CD4-positive, alpha-beta T cell (primary cell): ENCODE measurements at regions of chr7 and their contacts with region 1.

Region 1: DNA sequence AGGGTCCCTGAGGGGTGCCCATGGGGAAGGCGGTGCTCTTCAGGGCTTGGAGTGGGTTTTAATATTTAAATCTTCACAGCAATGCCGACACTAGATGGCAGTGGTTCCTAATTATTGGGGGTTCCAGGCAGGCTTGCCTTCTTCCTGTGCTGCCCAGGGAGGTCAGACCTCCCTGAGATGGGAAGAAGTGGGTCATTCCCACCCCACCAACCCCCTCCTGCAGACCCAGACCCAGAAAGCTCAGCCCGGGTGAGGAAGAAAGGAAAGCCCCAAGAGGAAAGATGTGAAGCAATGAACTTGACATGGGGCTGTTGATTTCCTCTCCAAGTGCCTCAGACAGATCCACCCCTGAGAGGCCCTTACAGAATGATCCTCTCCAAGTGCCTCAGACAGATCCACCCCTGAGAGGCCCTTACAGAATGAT is 85.1 kb upstream of the LANCL2 start:
- DNase-seq: peak; percentile 23 to 81 (median 44)
- ATAC-seq: peak; percentile 63
- H3K4me3 ChIP-seq: no peak overlapping the region
- H3K4me3 Mint-ChIP-seq: no peak overlapping the region
- H3K27ac ChIP-seq: no peak overlapping the region
- H3K27ac Mint-ChIP-seq: no peak overlapping the region
- H3K4me1 ChIP-seq: no peaks in the 10 kb centered on the region
- H3K4me1 Mint-ChIP-seq: no peaks in the 10 kb centered on the region
- H3K27me3 ChIP-seq: peaks cover 0 to 2% of the 10 kb centered on the region in 2 experiments
- H3K27me3 Mint-ChIP-seq: peaks cover 4% of the 10 kb centered on the region
- CTCF ChIP-seq: peak; percentile 71

Region 2: DNA sequence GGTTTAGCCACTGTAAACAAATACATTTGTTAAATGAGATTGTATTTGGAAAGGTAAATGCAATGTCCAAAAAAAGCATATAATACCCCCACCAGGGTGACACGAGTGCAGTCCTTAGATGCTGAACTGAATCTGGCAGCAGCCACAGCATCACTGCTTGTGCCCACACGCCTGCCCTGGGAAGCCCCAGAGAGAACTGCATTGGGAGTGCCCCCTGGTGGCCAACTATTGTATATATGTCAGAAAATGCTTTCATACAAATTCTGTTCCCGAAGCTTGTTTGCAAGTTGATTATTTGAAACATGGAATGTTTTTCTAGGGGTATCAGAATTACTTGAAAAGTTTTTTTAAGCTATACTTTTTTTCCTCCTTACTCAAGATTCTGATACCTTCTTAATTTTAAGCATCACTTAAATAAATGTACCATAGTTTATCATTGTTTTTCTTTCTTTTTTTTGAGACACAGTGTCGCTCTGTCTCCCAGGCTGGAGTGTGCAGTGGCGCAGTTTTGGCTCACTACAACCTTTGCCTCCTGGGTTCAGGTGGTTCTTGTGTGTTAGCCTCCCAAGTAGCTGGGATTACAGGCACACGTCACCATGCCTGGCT is 135.2 kb after region 1 on chr7:
- CTCF ChIA-PET with region 1: interaction called, 10 read pairs
- POLR2A ChIA-PET with region 1: no interaction called
- intact Hi-C with region 1: loop called (anchors 1 kb)
- DNase-seq: peak; percentile 62 to 88 (median 78)
- ATAC-seq: peak; percentile 99
- H3K4me3 ChIP-seq: no peak overlapping the region
- H3K4me3 Mint-ChIP-seq: no peak overlapping the region
- H3K27ac ChIP-seq: no peak overlapping the region
- H3K27ac Mint-ChIP-seq: no peak overlapping the region
- H3K4me1 ChIP-seq: no peaks in the 10 kb centered on the region
- H3K4me1 Mint-ChIP-seq: no peaks in the 10 kb centered on the region
- H3K27me3 ChIP-seq: no peaks in the 10 kb centered on the region
- H3K27me3 Mint-ChIP-seq: no peaks in the 10 kb centered on the region
- CTCF ChIP-seq: peak; percentile 95

Region 3: DNA sequence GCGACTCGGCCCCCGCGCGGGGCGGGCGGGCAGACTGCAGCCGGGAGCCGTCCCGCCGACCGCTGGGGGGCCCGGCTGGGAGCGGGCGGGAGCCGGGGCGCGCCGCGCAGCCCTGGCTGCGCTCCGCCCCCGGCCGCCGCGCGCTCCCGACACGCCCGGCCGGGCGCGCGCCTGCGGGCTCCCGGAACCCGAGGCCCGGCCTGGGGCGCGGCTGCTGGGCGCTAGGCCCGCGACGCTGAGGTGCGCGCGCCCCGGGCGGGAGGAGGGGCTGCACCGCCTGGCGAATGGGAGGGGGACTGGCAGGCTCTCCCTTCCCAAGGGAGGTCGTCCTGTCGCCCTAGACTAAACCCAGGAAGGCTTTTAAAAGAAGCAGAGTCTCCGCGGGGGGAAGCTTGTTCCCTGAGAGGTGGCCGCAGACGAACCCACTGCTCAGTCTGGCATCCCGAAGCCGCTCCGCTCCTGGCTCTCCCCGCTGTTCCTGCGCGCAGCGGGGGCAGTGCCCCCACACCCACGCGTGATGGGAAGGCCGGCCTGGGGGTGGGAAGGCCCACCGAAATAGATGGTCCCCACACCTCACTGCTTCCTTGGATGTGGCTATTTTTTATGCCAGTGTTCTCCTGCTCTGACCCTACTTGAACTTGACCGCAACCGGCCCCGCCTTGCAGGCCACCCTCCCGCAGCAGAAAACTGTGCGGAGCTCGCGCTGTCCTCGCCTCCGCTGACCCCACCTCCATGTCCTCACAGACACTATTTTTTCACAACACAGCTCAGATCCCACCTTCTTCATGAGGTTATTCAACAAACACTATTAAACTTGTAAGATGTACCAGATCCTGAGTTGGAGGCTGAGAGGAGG is 292.6 kb after region 1 on chr7 and contains the start of gene VOPP1:
- CTCF ChIA-PET with region 1: no interaction called
- POLR2A ChIA-PET with region 1: no interaction called
- intact Hi-C with region 1: no loop called
- DNase-seq: peak in 13 of 14 experiments; percentile 35 to 90 (median 57)
- ATAC-seq: peak; percentile 38
- H3K4me3 ChIP-seq: peak within 1 kb of the TSS; percentile 85
- H3K4me3 Mint-ChIP-seq: peak within 1 kb of the TSS; percentile 96
- H3K27ac ChIP-seq: peak within 1 kb of the TSS; percentile 75 to 89
- H3K27ac Mint-ChIP-seq: peak within 1 kb of the TSS; percentile 87
- H3K4me1 ChIP-seq: peaks cover 59% of the 10 kb centered on the region
- H3K4me1 Mint-ChIP-seq: peaks cover 63% of the 10 kb centered on the region
- H3K27me3 ChIP-seq: no peaks in the 10 kb centered on the region
- H3K27me3 Mint-ChIP-seq: no peaks in the 10 kb centered on the region
- CTCF ChIP-seq: no peak
- total RNA-seq, gene VOPP1: 49.6 to 53.1 TPM

Region 4: DNA sequence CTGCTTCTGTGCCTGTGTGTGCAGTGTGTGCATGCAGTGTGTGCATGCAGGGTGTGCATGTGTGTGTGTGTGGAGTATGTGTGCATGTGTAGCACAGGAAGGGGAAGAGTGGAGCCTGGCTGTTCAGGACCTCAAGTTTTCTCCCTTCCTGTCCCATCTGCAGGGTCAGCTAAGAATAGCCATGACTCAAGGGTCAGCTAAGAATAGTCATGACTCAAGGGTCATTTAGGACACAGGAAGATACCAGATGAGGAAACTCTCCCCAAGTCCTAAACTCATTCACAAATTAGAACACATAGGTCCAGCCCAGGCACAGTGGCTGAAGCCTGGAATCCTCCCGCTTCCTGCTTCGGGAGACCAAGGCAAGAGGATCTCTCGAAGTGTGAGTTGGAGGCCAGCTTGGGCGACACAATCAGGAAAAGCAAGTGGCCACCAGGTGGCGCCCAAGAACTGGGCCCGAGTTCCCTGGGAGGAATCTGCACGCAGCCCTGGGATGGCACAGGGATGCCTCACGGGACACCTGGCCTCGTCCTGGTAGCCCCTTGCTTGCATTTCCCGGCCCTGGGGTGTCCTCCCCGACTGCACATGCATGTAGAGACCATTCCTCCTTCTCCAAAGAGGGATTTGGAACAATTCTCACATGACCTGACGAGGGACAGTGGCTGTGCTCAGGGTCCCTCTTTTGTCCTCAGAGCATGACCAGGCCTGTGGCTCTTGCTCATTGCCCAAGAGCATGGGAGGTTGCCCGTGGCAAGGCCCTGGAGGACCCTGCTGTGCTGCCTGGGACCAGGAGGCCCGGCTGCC is 313.7 kb after region 1 on chr7:
- CTCF ChIA-PET with region 1: no interaction called
- POLR2A ChIA-PET with region 1: no interaction called
- intact Hi-C with region 1: loop called (anchors 5 kb)
- DNase-seq: peak; percentile 54 to 86 (median 66)
- ATAC-seq: peak; percentile 61
- H3K4me3 ChIP-seq: no peak overlapping the region
- H3K4me3 Mint-ChIP-seq: no peak overlapping the region
- H3K27ac ChIP-seq: no peak overlapping the region
- H3K27ac Mint-ChIP-seq: no peak overlapping the region
- H3K4me1 ChIP-seq: peaks cover 22% of the 10 kb centered on the region
- H3K4me1 Mint-ChIP-seq: peaks cover 16% of the 10 kb centered on the region
- H3K27me3 ChIP-seq: no peaks in the 10 kb centered on the region
- H3K27me3 Mint-ChIP-seq: peaks cover 4% of the 10 kb centered on the region
- CTCF ChIP-seq: peak; percentile 83